Endothelial cell of umbilical vein (primary cell): ENCODE measurements at regions of chr19 and their contacts with region 1.

Region 1: DNA sequence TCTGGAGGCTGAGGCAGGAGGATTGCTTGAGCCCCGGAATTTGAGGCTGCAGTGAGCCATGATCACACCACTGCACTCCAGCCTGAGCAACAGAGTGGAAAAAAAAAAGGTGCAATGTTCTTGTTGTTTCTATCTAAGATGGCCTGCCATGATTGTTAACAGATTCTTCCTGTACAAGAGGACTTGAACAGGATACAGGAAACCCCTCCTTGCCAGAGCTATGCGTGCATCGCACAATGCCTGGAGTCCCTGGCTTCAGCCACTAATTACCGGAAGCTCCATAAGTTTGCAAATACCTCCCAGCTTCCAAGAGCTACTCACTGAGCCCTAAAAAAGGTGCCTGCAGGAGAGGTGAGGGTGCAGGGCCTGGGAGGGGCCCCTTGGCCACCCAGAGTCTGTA is 13.1 kb upstream of the HIF3A start:
- DNase-seq: peak; percentile 89
- H3K4me3 ChIP-seq: no peak overlapping the region
- H3K27ac ChIP-seq: peak overlapping the region; percentile 28
- H3K4me1 ChIP-seq: peaks cover 16% of the 10 kb centered on the region
- H3K27me3 ChIP-seq: peaks cover 0 to 4% of the 10 kb centered on the region in 2 experiments
- CTCF ChIP-seq: no peak
- POLR2A ChIP-seq: peak; percentile 62

Region 2: GRCh38 chr19:46299004-46299509 is 15.3 kb after region 1 on chr19:
- CTCF ChIA-PET with region 1: interaction called, 119 read pairs
- POLR2A ChIA-PET with region 1: interaction called, 6 read pairs
- dilution Hi-C with region 1: no loop called
- intact Hi-C with region 1: loop called (anchors 2 kb)
- DNase-seq: peak; percentile 95
- H3K4me3 ChIP-seq: no peak overlapping the region
- H3K27ac ChIP-seq: peak overlapping the region; percentile 25
- H3K4me1 ChIP-seq: peaks cover 38% of the 10 kb centered on the region
- H3K27me3 ChIP-seq: peaks cover 0 to 13% of the 10 kb centered on the region in 2 experiments
- CTCF ChIP-seq: no peak
- POLR2A ChIP-seq: no peak

Region 3: GRCh38 chr19:46346821-46347571 is 63.2 kb after region 1 on chr19 and contains the start of gene PPP5C:
- CTCF ChIA-PET with region 1: interaction called, 25 read pairs
- POLR2A ChIA-PET with region 1: no interaction called
- dilution Hi-C with region 1: no loop called
- intact Hi-C with region 1: loop called (anchors 1 kb)
- DNase-seq: peak; percentile 92
- H3K4me3 ChIP-seq: peak within 1 kb of the TSS; percentile 53 to 89 (median 65)
- H3K27ac ChIP-seq: peak within 1 kb of the TSS; percentile 52
- H3K4me1 ChIP-seq: peaks cover 35% of the 10 kb centered on the region
- H3K27me3 ChIP-seq: no peaks in the 10 kb centered on the region
- CTCF ChIP-seq: peak; percentile 97 to 98
- POLR2A ChIP-seq: peak; percentile 68
- total RNA-seq, gene PPP5C: 102 and 114 TPM in 2 replicates

Region 4: GRCh38 chr19:46392243-46392801 is 108.6 kb after region 1 on chr19:
- CTCF ChIA-PET with region 1: interaction called, 30 read pairs
- POLR2A ChIA-PET with region 1: no interaction called
- dilution Hi-C with region 1: no loop called
- intact Hi-C with region 1: loop called (anchors 1 kb)
- DNase-seq: no peak
- H3K4me3 ChIP-seq: no peak overlapping the region
- H3K27ac ChIP-seq: no peak overlapping the region
- H3K4me1 ChIP-seq: no peaks in the 10 kb centered on the region
- H3K27me3 ChIP-seq: no peaks in the 10 kb centered on the region
- CTCF ChIP-seq: no peak
- POLR2A ChIP-seq: no peak

Region 5: DNA sequence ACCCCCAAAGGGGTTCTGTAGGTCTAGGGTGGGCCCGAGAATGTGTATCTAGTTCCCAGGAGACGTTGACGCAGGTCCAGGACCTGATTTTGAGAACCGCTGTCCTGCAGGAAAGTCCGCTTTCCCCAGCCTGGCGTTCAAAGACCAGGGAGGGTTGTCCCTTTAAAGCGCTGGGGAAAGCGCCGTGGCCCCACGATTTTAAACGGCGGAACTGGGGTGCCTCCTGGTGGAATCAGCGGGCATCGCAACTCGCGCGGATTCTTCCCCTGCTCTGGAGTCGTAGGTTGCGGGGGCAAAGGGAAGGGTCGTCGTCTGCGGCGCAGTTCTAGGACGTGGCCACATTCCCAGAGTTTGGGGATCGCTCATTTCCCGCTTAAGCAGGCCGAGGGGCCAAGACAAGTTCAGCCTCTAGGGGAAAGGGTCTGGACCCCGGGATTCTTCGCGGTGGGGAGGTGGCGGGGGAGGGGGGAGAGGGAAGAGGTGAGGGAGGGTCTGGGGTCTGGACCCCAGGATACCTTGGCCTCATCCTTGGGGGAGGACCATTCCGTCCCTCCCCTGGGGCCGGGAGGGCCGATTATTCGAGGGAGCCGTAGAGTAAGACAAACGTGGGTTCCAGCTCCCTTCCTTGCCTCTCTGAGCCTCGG is 204.2 kb after region 1 on chr19:
- CTCF ChIA-PET with region 1: interaction called, 53 read pairs
- POLR2A ChIA-PET with region 1: no interaction called
- dilution Hi-C with region 1: no loop called
- intact Hi-C with region 1: loop called (anchors 1 kb)
- DNase-seq: peak; percentile 58
- H3K4me3 ChIP-seq: no peak overlapping the region
- H3K27ac ChIP-seq: no peak overlapping the region
- H3K4me1 ChIP-seq: peaks cover 6% of the 10 kb centered on the region
- H3K27me3 ChIP-seq: peaks cover 49% of the 10 kb centered on the region in 2 experiments
- CTCF ChIP-seq: peak; percentile 85 to 88
- POLR2A ChIP-seq: no peak